Right cardiac atrium (tissue), 5 donors: ENCODE measurements at regions of chrX and their contacts with region 1.

Region 1: DNA sequence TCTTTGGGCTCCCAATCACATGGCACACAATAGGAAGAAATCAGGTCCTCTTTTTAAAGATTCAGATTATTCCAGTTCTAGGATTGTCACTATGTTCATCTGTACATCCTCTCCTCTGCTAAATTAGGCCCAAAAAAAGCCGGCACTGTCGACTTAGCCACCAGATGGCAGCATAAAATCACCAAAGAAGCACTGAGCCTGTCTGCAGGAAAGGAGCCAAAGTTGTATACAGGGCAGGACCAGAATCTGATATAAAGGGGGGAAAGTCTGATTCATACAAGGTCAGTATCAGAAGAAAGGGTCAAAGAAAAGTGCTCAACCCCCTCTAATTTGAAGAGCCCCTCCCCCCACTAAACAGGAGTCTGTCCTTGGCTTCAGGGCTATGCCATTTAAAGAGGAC is 292.5 kb downstream of the CHIC1 start:
- DNase-seq: peak; percentile 47 to 74 (median 54)
- ATAC-seq: peak; percentile 26 to 45
- H3K4me3 ChIP-seq: no peak overlapping the region
- H3K27ac ChIP-seq: no peak overlapping the region
- H3K4me1 ChIP-seq: no peaks in the 10 kb centered on the region
- H3K27me3 ChIP-seq: no peaks in the 10 kb centered on the region

Region 2: DNA sequence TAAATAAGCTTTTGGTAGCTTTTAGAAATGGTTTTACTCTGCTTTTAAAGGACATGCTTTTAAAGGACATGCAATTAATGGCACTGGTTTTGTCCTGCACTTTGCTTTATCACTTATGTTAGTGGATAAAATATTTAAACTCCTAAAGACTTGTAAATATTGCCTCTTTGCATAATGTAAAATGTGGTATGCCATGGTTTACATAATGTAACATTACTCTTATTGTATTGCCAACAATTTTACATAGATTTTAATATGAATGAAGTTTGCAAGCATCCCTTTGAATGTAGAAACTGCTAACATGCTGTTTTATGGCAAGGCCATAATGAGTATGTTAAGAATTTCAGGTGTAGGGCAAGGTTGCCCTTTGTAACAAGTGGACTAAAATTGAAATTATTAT is 174.1 kb before region 1 on chrX:
- intact Hi-C with region 1: no loop called
- DNase-seq: no peak
- ATAC-seq: no peak
- H3K4me3 ChIP-seq: no peak overlapping the region
- H3K27ac ChIP-seq: no peak overlapping the region
- H3K4me1 ChIP-seq: no peaks in the 10 kb centered on the region
- H3K27me3 ChIP-seq: no peaks in the 10 kb centered on the region

Region 3: GRCh38 chrX:73785493-73785892 is 70.1 kb before region 1 on chrX:
- intact Hi-C with region 1: no loop called
- DNase-seq: no peak
- ATAC-seq: no peak
- H3K4me3 ChIP-seq: no peak overlapping the region
- H3K27ac ChIP-seq: no peak overlapping the region
- H3K4me1 ChIP-seq: no peaks in the 10 kb centered on the region
- H3K27me3 ChIP-seq: no peaks in the 10 kb centered on the region

Region 4: DNA sequence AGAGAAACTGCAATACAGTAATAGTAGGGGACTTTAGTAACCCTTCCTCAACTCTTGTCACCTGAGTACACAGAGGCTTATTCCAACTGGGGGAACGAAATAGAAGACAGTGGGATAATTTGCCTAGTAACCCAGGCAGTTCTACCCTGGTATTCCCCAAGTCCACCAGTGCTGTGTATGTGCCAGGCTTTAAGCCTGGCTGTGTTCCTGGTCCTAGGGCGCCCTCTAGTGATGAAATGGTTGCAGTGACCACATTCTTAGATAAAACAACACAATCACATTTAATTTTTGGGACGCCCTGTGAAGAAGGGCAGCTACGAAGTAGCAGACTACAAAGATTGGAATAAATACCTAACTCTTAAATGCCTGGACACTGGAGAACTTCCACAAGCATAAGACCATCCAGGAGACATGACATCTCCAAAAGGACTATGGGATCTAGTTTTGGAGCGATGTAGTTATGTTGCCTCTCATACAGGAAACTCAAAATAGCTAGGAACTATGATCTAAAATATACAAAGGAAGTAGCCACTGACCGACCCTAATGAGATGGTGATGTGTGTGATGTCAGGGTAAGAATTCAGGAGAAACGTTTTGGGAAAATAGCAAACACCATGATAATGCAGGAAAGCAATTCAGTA is 160.0 kb after region 1 on chrX:
- intact Hi-C with region 1: loop called in 3 of 4 experiments (anchors 2 to 5 kb)
- DNase-seq: peak in 2 of 3 donors; percentile 46 to 55
- ATAC-seq: peak; percentile 43 to 90
- H3K4me3 ChIP-seq: no peak overlapping the region
- H3K27ac ChIP-seq: no peak overlapping the region
- H3K4me1 ChIP-seq: no peaks in the 10 kb centered on the region
- H3K27me3 ChIP-seq: no peaks in the 10 kb centered on the region

Region 5: GRCh38 chrX:74133156-74133796 is 277.7 kb after region 1 on chrX:
- intact Hi-C with region 1: loop called in 3 of 4 experiments (anchors 5 kb)
- DNase-seq: peak in 2 of 3 donors; percentile 44 to 53
- ATAC-seq: peak; percentile 72 to 78
- H3K4me3 ChIP-seq: no peak overlapping the region
- H3K27ac ChIP-seq: no peak overlapping the region
- H3K4me1 ChIP-seq: no peaks in the 10 kb centered on the region
- H3K27me3 ChIP-seq: no peaks in the 10 kb centered on the region

Region 6: DNA sequence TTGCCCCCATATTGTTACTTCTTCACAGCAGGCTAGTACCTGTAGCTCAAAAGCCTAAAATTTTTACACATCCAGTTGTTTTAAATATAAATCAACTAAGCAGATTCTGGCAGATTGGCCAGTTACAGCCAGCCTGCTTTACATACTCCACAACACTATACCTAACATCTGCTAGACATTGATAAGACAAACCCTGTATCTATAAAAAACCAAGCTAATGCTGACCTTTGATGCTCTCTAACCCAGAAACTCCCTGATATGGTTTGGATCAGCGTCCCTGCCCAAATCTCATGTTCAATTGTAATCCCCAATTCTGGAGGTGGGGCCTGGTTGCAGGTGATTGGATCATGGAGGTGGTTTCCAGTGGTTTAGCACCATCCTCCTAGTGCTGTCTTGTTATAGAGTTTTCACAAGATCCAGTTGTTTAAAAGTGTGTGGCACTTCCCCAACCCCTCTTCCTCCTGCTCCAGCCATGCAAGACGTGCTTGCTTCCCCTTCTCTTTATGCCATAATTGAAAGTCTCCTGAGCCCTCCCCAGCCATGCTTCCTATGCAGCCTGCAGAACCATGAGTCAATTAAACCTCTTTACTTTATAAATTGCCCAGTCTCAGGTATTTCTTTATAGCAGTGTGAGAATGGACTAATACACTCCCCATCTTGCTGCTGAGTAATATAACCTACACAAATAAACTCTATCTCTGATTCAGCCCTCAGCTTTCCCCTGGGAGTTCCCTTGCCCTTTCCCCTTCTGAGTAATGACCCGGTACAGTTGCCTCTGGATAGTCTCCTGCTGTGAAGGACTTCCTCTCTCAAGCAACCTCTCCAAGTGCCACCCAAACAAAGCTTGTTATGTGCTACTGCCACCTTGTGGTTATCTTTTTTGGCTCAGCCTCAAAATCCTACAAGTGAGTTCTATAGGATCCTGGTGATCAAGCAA is 488.1 kb after region 1 on chrX:
- intact Hi-C with region 1: loop called in 1 of 4 experiments (anchors 5 kb)
- DNase-seq: peak in 1 of 3 donors; percentile 41
- ATAC-seq: peak; percentile 85 to 98
- H3K4me3 ChIP-seq: no peak overlapping the region
- H3K27ac ChIP-seq: no peak overlapping the region
- H3K4me1 ChIP-seq: no peaks in the 10 kb centered on the region
- H3K27me3 ChIP-seq: no peaks in the 10 kb centered on the region

Region 7: DNA sequence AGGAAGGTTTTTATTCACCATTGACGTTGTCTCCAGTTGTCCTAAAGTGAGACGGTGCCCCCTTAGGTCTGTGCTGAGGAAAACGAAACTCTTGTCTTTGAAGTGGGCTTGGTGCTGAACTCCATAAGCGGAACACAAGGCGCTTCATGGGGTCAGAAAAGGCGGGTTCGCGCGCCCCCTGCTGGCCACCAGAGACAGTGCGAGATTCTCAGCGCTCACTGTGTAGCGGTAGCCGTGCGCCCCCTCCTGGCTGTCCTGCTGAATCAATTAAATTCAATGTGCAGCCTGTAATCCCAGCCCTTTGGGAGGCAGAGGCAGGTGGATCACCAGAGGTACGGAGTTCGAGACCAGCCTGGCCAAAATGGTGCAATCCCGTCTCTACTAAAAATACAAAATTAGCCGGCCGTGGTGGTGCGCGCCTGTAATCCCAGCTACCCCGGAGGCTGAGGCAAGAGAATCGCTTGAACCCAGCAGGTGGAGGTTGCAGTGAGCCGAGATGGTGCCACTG is 694.8 kb after region 1 on chrX:
- intact Hi-C with region 1: loop called in 1 of 4 experiments (anchors 10 kb)
- DNase-seq: peak; percentile 82 to 93 (median 93)
- ATAC-seq: peak; percentile 90 to 94
- H3K4me3 ChIP-seq: peak overlapping the region; percentile 15
- H3K27ac ChIP-seq: no peak overlapping the region
- H3K4me1 ChIP-seq: no peaks in the 10 kb centered on the region
- H3K27me3 ChIP-seq: no peaks in the 10 kb centered on the region